ENCODE measurements at regions of chr17 and their contacts with region 1.

Region 1: GRCh38 chr17:63478791-63479494 is 2.1 kb downstream of the ACE start:
- DNase-seq: peak; percentile 87
- ATAC-seq: peak; percentile 89
- H3K4me3 Mint-ChIP-seq: no peak overlapping the region
- H3K27ac Mint-ChIP-seq: no peak overlapping the region
- H3K4me1 Mint-ChIP-seq: peaks cover 16% of the 10 kb centered on the region
- H3K27me3 Mint-ChIP-seq: peaks cover 39% of the 10 kb centered on the region

Region 2: GRCh38 chr17:63381101-63381729 is 97.7 kb before region 1 on chr17:
- CTCF ChIA-PET with region 1: no interaction called
- POLR2A ChIA-PET with region 1: no interaction called
- DNase-seq: no peak
- ATAC-seq: no peak
- H3K4me3 Mint-ChIP-seq: no peak overlapping the region
- H3K27ac Mint-ChIP-seq: no peak overlapping the region
- H3K4me1 Mint-ChIP-seq: no peaks in the 10 kb centered on the region
- H3K27me3 Mint-ChIP-seq: no peaks in the 10 kb centered on the region

Region 3: DNA sequence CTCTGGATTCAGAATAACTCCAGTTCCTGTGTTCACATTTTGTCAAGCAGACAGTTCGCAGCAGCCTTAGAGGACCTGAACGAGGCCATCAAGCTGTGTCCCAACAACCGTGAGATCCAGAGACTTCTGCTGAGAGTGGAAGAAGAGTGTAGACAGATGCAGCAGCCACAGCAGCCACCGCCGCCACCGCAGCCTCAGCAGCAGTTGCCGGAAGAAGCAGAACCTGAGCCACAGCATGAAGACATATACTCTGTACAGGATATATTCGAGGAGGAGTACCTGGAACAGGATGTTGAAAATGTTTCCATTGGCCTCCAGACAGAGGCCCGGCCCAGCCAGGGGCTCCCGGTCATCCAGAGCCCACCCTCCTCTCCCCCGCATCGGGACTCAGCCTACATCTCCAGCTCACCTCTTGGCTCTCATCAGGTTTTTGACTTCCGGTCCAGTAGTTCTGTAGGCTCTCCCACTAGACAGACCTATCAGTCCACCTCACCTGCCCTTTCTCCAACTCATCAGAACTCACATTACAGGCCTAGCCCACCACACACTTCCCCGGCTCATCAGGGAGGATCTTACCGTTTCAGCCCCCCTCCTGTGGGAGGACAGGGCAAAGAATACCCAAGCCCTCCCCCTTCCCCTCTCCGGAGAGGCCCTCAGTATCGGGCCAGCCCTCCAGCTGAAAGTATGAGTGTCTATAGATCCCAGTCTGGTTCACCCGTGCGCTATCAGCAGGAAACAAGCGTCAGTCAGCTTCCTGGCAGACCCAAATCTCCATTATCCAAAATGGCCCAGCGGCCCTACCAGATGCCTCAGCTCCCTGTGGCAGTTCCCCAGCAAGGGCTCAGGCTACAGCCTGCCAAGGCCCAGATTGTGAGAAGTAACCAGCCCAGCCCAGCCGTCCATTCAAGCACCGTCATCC is 58.7 kb before region 1 on chr17:
- CTCF ChIA-PET with region 1: interaction called, 270 read pairs
- POLR2A ChIA-PET with region 1: no interaction called
- DNase-seq: peak; percentile 82
- ATAC-seq: peak; percentile 93
- H3K4me3 Mint-ChIP-seq: peak overlapping the region; percentile 5
- H3K27ac Mint-ChIP-seq: peak overlapping the region; percentile 85
- H3K4me1 Mint-ChIP-seq: peaks cover 28% of the 10 kb centered on the region
- H3K27me3 Mint-ChIP-seq: peaks cover 5% of the 10 kb centered on the region

Region 4: DNA sequence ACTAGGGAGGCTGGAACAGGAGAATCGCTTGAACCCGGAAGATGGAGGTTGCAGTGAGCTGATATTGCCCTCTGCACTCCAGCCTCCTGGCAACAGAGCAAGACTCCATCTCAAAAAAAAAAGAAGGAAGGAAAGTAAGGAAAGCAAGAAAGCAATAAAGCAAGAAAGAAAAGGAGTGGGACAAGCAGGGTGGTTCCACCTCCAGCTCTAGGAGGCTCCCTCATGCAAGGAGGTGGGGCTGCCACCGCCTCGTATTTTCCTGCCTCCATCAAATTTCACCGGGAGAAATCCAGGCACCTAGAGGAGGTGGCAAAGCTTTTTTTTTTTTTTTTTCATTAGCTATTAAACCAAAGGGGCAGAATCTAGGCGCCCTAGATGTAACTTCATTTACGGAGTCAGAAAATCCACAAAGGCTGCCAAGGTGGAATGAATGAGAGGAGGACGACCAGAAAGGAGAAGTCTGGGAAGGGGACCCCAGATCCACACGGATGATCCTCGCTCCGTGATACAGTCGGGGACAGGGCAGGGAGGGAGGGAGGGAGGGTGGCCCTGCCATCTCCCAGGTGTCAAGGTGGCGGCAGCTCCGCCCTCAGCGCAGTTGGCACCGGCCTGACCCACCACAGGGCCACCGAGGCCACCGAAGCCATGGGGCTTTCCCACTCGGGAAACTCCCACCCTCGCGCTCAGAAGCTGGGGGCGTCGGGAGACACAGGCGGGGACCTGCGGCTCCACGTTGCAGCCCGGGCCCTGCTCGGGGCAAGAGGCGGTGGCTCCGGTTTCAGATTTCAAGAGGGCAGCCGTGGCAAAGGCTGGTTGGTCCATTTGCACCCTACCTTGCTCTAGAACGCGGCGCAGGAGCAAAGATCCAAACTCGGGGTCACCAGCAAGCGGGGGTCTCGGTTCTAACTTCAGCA is 33.6 kb before region 1 on chr17:
- CTCF ChIA-PET with region 1: interaction called, 12 read pairs
- POLR2A ChIA-PET with region 1: no interaction called
- DNase-seq: no peak
- ATAC-seq: peak; percentile 30
- H3K4me3 Mint-ChIP-seq: peak overlapping the region; percentile 52
- H3K27ac Mint-ChIP-seq: no peak overlapping the region
- H3K4me1 Mint-ChIP-seq: peaks cover 33% of the 10 kb centered on the region
- H3K27me3 Mint-ChIP-seq: peaks cover 18% of the 10 kb centered on the region

Measured in activated CD8-positive, alpha-beta T cell treated with anti-CD3 and anti-CD28 coated beads, Interleukin-2, amount 10 ng/mL, durations not matched to agents 7 days and 5 days (primary cell).